CD4-positive, alpha-beta memory T cell (primary cell): ENCODE measurements at regions of chr12 and their contacts with region 1.

Region 1: GRCh38 chr12:40152783-40153383 is 47.0 kb upstream of the SLC2A13 start:
- DNase-seq: peak in 3 of 5 donors; percentile 23 to 37 (median 29)
- H3K4me3 ChIP-seq: no peak overlapping the region
- H3K4me3 Mint-ChIP-seq: no peak overlapping the region
- H3K27ac ChIP-seq: no peak overlapping the region
- H3K27ac Mint-ChIP-seq: no peak overlapping the region
- H3K4me1 ChIP-seq: no peaks in the 10 kb centered on the region
- H3K4me1 Mint-ChIP-seq: peaks cover 0 to 1% (median 0%) of the 10 kb centered on the region in 4 donors
- H3K27me3 ChIP-seq: no peaks in the 10 kb centered on the region
- H3K27me3 Mint-ChIP-seq: peaks cover 2 to 5% of the 10 kb centered on the region in 2 donors

Region 2: GRCh38 chr12:40016980-40017379 is 135.9 kb before region 1 on chr12:
- CTCF ChIA-PET with region 1: no interaction called
- POLR2A ChIA-PET with region 1: no interaction called
- intact Hi-C with region 1: no loop called
- DNase-seq: no peak
- H3K4me3 ChIP-seq: no peak overlapping the region
- H3K4me3 Mint-ChIP-seq: no peak overlapping the region
- H3K27ac ChIP-seq: no peak overlapping the region
- H3K27ac Mint-ChIP-seq: no peak overlapping the region
- H3K4me1 ChIP-seq: no peaks in the 10 kb centered on the region
- H3K4me1 Mint-ChIP-seq: peaks cover 0 to 3% (median 1%) of the 10 kb centered on the region in 4 donors
- H3K27me3 ChIP-seq: no peaks in the 10 kb centered on the region
- H3K27me3 Mint-ChIP-seq: no peaks in the 10 kb centered on the region

Region 3: DNA sequence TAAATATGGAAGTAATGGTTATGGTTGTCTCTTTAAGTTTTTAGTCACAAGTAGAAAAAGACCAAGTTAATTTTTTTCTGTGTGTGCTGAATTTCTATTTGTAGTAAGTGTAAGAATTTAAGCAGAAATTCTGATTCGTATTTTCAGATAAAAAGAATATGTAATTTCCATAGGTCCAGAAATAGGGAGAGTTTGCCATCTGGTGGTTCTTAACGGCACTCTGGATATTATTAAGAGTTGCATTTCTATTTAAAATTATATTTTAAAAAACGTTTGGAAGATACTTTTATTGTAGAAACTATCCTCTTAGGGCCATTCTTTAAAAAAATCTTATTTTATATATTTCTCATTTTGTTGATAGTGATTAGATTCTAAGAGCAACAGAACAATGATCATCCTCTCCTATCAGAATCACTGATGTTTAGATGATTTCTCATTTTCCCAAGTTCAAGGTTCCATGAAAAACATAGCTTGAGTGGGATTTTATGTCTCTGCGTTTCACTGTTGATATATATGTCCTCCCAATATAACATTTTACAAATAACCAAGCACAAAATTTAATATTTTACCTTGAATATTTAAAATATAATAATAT is 160.2 kb after region 1 on chr12:
- CTCF ChIA-PET with region 1: interaction called, 3 read pairs
- POLR2A ChIA-PET with region 1: no interaction called
- intact Hi-C with region 1: loop called (anchors 2 kb)
- DNase-seq: peak in 1 of 5 donors; percentile 4
- H3K4me3 ChIP-seq: no peak overlapping the region
- H3K4me3 Mint-ChIP-seq: no peak overlapping the region
- H3K27ac ChIP-seq: no peak overlapping the region
- H3K27ac Mint-ChIP-seq: no peak overlapping the region
- H3K4me1 ChIP-seq: no peaks in the 10 kb centered on the region
- H3K4me1 Mint-ChIP-seq: no peaks in the 10 kb centered on the region
- H3K27me3 ChIP-seq: no peaks in the 10 kb centered on the region
- H3K27me3 Mint-ChIP-seq: no peaks in the 10 kb centered on the region